Posterior vena cava (tissue), 2 donors: ENCODE measurements at regions of chr3 and their contacts with region 1.

Region 1: GRCh38 chr3:127217598-127218451 is 24.9 kb downstream of the PRR23E start:
- DNase-seq: no peak

Region 2: DNA sequence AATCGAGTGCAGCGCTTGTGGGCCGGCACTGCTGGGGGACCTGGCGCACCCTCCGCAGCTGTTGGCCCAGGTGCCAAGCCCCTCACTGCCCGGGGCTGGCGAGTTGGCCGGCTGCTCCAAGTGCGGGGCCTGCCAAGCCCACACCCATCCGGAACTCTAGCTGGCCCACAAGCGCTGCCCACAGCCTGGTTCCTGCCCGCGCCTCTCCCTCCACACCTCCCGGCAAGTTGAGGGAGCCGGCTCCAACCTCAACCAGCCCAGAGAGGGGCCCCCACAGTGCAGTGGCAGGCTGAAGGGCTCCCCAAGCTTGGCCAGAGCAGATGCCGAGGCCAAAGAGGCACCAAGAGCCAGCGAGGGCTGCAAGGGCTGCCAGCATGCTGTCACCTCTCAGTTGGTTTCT is 161.5 kb before region 1 on chr3:
- intact Hi-C with region 1: loop called in 1 of 2 experiments (anchors 5 kb)
- DNase-seq: peak; percentile 69

Region 3: DNA sequence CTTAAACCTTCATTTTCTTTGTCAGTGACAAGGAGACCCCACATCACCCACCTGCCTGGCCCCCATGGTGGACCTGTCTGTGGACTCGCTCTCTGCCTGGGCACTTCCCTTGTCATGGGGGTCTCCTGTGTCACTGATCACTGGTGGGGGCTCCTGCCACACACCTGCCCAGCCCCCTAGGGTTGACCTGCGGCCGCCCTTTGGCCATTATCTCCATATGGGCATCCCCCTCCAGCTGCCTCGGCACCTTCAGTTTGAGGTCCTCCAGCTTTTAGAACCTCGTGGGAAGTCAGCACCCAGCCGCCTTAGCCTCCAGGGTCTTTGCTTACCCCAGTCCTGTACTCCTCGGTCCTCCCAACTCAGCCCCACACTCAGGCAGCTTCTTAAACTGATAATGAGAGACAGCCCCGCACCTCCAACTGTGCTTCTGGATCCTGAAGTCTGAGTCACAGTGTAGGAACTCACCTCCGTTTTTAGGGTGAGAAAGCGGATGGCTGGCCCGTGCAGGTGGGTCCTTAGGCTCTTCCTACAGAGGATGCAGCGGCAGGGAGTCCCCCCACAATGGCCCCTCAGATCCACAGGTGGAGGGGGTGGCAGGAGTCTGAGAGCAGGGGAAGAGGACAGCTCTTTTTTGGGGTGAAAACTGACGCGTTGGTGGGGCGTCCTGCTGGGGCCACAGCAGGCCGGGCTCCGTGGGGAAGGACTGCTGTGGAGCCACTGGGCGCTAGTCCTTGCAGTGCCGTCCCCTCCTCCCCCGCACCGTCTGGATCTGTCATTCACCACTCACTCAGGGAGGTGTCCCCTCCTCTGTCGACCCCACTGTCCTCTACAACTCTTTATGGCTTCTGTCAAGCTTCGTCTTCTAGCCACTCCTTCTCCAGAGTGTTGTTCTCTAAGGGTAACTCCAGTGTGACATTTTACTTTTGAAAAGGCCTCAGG is 33.6 kb before region 1 on chr3:
- intact Hi-C with region 1: no loop called
- DNase-seq: no peak